K562 (cell line): ENCODE measurements at regions of chr6 and their contacts with region 1.

Region 1: GRCh38 chr6:42879372-42880239 is at the start of gene RPL7L1:
- DNase-seq: peak; percentile 85 to 94 (median 88)
- ATAC-seq: peak; percentile 96
- H3K4me3 ChIP-seq: peak within 1 kb of the TSS; percentile 92
- H3K27ac ChIP-seq: peak within 1 kb of the TSS; percentile 99
- H3K4me1 ChIP-seq: peaks cover 0 to 20% of the 10 kb centered on the region in 2 experiments; a peak in 3 of 5 replicates
- H3K27me3 ChIP-seq: no peaks in the 10 kb centered on the region
- CTCF ChIP-seq: no peak; a peak in 2 of 6 replicates
- EP300 ChIP-seq: peak; percentile 43
- POLR2A ChIP-seq: peak; percentile 99
- RAD21 ChIP-seq: 0 out of 4 replicates have a peak, but pooled peaks of 1 of the 2 experiments have one; percentile 4
- polyA plus RNA-seq, gene RPL7L1: 164 to 176 TPM

Region 2: DNA sequence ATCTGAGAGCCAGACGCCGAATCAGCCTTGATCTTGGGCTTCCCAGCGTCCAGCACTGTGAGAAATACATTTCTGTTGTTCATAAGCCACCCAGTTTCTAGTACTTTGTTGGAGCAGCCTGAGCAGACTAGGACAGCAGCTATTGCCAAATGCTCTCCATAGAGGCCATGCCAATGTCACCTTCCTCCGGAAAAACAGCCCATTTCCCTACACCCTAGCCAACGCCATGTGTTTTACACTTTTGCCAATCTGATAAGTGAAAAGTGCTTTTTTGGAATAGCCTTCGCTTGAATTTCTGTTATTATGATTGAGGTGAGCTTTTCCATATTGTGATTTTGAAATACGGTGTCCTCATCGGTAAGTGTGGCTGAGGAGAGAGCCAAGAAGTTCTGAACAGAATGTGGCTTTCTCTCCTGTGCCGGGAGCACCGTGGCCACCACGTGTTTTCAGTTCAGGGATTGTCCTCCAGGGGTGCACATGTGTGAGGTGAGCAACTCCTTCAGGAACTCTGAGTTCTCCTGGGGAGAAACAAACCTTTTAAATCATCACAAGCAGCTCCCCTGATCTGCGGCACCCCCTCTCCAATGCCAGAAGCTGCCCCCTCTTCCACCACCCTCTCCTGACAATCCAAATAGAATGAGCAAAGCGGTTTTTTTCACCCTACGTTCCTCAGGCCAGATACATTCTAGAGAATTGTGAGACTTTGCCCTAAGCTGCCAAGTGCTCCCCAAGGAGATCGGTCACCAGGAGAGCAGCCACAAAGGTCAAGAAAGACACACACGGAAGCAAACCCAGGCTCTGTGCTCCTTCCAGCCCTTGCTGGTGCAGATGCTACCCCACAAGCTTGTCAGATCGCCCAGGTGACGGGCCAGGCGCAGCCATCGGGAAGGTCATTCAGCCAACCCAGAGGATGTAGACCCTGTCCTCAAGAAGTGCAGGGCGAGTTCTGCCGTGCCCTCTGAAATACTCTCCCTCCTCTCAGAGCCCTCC is 793.3 kb before region 1 on chr6:
- CTCF ChIA-PET with region 1: no interaction called
- POLR2A ChIA-PET with region 1: interaction called, 3 read pairs
- in situ Hi-C with region 1: no loop called
- intact Hi-C with region 1: loop called (anchors 10 kb)
- DNase-seq: peak; percentile 63 to 71 (median 66)
- ATAC-seq: peak; percentile 67
- H3K4me3 ChIP-seq: no peak overlapping the region
- H3K27ac ChIP-seq: no peak overlapping the region
- H3K4me1 ChIP-seq: peaks cover 27 to 32% of the 10 kb centered on the region in 2 experiments
- H3K27me3 ChIP-seq: no peaks in the 10 kb centered on the region
- CTCF ChIP-seq: peak; percentile 39 to 58 (median 42); a peak in 5 of 6 replicates
- EP300 ChIP-seq: no peak
- POLR2A ChIP-seq: no peak
- RAD21 ChIP-seq: peak in 1 of 2 experiments; percentile 23; a peak in 1 of 4 replicates

Region 3: GRCh38 chr6:42572523-42572922 is 307.1 kb before region 1 on chr6:
- CTCF ChIA-PET with region 1: no interaction called
- POLR2A ChIA-PET with region 1: no interaction called
- in situ Hi-C with region 1: no loop called
- intact Hi-C with region 1: loop called (anchors 5 kb)
- DNase-seq: no peak
- ATAC-seq: peak; percentile 20
- H3K4me3 ChIP-seq: no peak overlapping the region
- H3K27ac ChIP-seq: peak overlapping the region; percentile 19; the same call in 1 of the 3 replicates
- H3K4me1 ChIP-seq: peaks cover 3 to 5% of the 10 kb centered on the region in 2 experiments; a peak in 3 of 5 replicates
- H3K27me3 ChIP-seq: no peaks in the 10 kb centered on the region
- CTCF ChIP-seq: no peak
- EP300 ChIP-seq: no peak
- POLR2A ChIP-seq: no peak
- RAD21 ChIP-seq: no peak

Region 4: DNA sequence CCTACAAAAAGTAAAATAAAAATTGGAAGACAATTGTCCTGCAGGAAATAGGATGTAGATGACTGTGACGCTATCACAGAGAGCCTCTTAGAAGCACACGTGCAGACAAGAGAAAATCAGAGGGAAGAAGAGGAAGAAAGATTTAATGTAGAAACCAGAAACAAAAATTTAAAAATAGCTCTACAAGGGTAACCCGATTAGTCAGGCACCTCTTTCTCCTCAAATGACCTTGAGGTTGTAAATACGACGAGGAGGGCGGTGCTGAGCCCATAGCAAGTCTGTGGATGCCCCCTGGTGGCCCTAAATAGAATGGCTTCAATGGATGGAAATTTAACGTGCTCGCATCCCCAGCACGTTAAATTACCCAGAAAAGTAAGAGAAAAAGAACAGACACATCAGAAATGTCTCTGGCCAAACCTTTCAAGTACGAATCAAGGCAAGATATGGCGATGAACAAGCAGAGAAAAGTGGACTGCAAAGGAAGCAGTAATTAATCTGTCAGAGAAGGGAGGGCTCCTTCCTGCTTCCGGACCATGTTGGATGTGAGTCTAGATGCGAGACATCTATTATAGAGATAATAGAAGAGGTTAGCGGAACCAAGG is 153.0 kb before region 1 on chr6:
- CTCF ChIA-PET with region 1: interaction called, 5 read pairs
- POLR2A ChIA-PET with region 1: interaction called, 5 read pairs
- in situ Hi-C with region 1: no loop called
- intact Hi-C with region 1: loop called (anchors 5 kb)
- DNase-seq: peak; percentile 87 to 92 (median 90)
- ATAC-seq: peak; percentile 90
- H3K4me3 ChIP-seq: no peak overlapping the region
- H3K27ac ChIP-seq: no peak overlapping the region
- H3K4me1 ChIP-seq: peaks cover 6 to 8% of the 10 kb centered on the region in 2 experiments; a peak in 4 of 5 replicates
- H3K27me3 ChIP-seq: peaks cover 7 to 11% of the 10 kb centered on the region in 2 experiments
- CTCF ChIP-seq: peak; percentile 94 to 98 (median 98)
- EP300 ChIP-seq: peak; percentile 27; the same call in 1 of the 2 replicates
- POLR2A ChIP-seq: no peak
- RAD21 ChIP-seq: peak; percentile 99

Region 5: GRCh38 chr6:42782622-42783176 is 96.9 kb before region 1 on chr6:
- CTCF ChIA-PET with region 1: no interaction called
- POLR2A ChIA-PET with region 1: interaction called, 6 read pairs
- in situ Hi-C with region 1: no loop called
- intact Hi-C with region 1: loop called (anchors 1 kb)
- DNase-seq: peak; percentile 87 to 92 (median 90)
- ATAC-seq: peak; percentile 45
- H3K4me3 ChIP-seq: peak overlapping the region; percentile 77
- H3K27ac ChIP-seq: peak overlapping the region; percentile 91
- H3K4me1 ChIP-seq: peaks cover 35 to 53% of the 10 kb centered on the region in 2 experiments
- H3K27me3 ChIP-seq: no peaks in the 10 kb centered on the region
- CTCF ChIP-seq: no peak
- EP300 ChIP-seq: no peak; the same call in 1 of the 2 replicates
- POLR2A ChIP-seq: peak; percentile 86
- RAD21 ChIP-seq: no peak

Region 6: GRCh38 chr6:44002593-44003344 is 1123.2 kb after region 1 on chr6:
- CTCF ChIA-PET with region 1: no interaction called
- POLR2A ChIA-PET with region 1: no interaction called
- in situ Hi-C with region 1: no loop called
- intact Hi-C with region 1: no loop called
- DNase-seq: no peak
- ATAC-seq: no peak
- H3K4me3 ChIP-seq: no peak overlapping the region
- H3K27ac ChIP-seq: no peak overlapping the region
- H3K4me1 ChIP-seq: peaks cover 27 to 31% of the 10 kb centered on the region in 2 experiments
- H3K27me3 ChIP-seq: no peaks in the 10 kb centered on the region
- CTCF ChIP-seq: no peak
- EP300 ChIP-seq: no peak
- POLR2A ChIP-seq: no peak
- RAD21 ChIP-seq: no peak